Dendritic cell treated with granulocyte-macrophage colony-stimulating factor and Interleukin-4, amounts not matched to agents 40 ng/mL and 50 ng/mL, for 4 days (primary cell): ENCODE measurements at regions of chr6 and their contacts with region 1.

Region 1: GRCh38 chr6:41723530-41724227 is 11.7 kb downstream of the TFEB start:
- H3K4me3 Mint-ChIP-seq: peak overlapping the region; percentile 70
- H3K27ac Mint-ChIP-seq: peak overlapping the region; percentile 90
- H3K4me1 Mint-ChIP-seq: peaks cover 94% of the 10 kb centered on the region
- H3K27me3 Mint-ChIP-seq: no peaks in the 10 kb centered on the region

Region 2: GRCh38 chr6:41705996-41706835 is 17.5 kb before region 1 on chr6:
- intact Hi-C with region 1: loop called (anchors 1 kb)
- H3K4me3 Mint-ChIP-seq: peak overlapping the region; percentile 49
- H3K27ac Mint-ChIP-seq: peak overlapping the region; percentile 88
- H3K4me1 Mint-ChIP-seq: peaks cover 81% of the 10 kb centered on the region
- H3K27me3 Mint-ChIP-seq: no peaks in the 10 kb centered on the region

Region 3: GRCh38 chr6:41735427-41736356 is 12.0 kb after region 1 on chr6 and contains the start of gene TFEB:
- intact Hi-C with region 1: loop called (anchors 1 kb)
- H3K4me3 Mint-ChIP-seq: peak within 1 kb of the TSS; percentile 83
- H3K27ac Mint-ChIP-seq: peak within 1 kb of the TSS; percentile 85
- H3K4me1 Mint-ChIP-seq: peaks cover 42% of the 10 kb centered on the region
- H3K27me3 Mint-ChIP-seq: no peaks in the 10 kb centered on the region

Region 4: GRCh38 chr6:41920921-41921711 is 197.4 kb after region 1 on chr6 and contains the starts of genes BYSL and MED20:
- intact Hi-C with region 1: no loop called
- H3K4me3 Mint-ChIP-seq: peak within 1 kb of the TSS; percentile 99
- H3K27ac Mint-ChIP-seq: peak within 1 kb of the TSS; percentile 99
- H3K4me1 Mint-ChIP-seq: peaks cover 60% of the 10 kb centered on the region
- H3K27me3 Mint-ChIP-seq: no peaks in the 10 kb centered on the region